Left ventricle myocardium superior (tissue), 1 donor: ENCODE measurements at regions of chr15 and their contacts with region 1.

Region 1: DNA sequence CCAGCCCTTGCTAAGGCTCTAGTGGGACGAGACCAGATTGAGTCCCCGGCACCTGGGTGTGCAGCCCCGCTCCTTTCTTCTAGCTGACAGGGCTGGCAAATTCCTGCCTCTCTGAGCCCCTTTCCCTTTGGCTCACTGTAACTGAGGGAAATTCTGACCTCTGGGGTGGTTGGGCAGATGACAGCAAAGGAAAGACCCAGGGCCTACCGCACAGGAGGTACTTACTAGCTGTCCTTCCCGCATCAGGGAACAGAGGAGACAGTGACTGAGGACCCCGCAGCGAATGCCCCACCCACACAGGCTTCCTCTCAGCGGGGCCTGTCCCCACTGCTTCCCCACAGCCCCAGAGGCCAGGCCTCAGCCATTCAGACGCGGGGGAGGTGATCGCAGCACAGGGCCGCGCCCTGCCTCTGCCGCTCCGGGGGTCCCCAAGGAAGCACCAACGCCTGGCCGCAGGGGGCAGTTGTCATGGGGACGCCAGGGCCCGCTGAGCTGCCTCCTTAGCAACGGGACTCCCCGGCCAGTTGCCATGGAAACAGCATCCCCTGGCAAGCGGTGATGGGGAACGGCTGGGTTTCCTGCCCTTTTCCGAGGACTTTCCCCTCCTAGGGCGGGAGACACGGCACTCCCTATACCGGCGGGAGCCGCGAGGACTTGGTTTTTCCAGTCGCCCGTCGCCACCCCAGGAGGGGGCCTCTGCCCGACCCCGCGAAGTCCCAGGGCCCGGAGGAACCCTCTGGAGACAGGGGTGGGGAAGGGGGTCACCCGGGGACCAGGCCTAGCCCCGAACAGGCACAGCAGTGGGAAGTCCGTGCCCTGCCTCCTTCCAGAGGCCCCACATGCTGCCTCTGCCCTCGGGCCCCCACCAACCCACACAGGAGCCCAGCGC is 50.1 kb downstream of the HCN4 start:
- DNase-seq: peak; percentile 33
- ATAC-seq: no peak

Region 2: DNA sequence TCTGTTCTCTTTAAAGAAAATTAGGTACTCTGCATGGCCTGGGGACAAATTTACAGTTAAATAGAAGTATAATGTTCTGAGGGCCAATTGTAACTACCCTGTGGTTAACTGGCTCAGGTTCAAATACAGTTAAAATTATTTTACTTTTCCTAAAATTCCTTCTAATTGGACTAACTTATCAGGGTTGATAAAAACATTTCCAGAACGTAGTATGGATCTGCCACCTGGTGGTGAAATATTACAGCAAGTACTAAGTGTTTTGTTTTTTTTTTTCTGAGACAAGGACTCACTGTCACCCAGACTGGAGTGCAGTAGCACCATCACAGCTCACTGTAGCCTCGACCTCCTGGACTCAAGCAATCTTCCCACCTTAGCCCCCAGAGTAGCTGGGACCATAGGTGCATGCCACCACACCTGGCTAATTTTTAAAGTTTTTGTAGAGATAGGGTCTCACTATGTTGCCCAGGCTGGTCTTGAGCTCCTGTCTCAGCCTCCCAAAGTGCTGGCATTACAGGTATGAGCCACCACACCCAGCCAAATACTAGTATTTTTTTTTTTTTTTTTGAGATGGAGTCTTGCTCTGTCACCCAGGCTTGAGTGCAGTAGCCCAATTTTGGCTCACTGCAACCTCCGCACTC is 237.3 kb before region 1 on chr15:
- intact Hi-C with region 1: no loop called
- DNase-seq: no peak
- ATAC-seq: peak; percentile 31

Region 3: GRCh38 chr15:73539212-73540125 is 220.8 kb after region 1 on chr15:
- intact Hi-C with region 1: loop called (anchors 10 kb)
- DNase-seq: no peak
- ATAC-seq: no peak